ENCODE measurements at regions of chr22 and their contacts with region 1.

Region 1: DNA sequence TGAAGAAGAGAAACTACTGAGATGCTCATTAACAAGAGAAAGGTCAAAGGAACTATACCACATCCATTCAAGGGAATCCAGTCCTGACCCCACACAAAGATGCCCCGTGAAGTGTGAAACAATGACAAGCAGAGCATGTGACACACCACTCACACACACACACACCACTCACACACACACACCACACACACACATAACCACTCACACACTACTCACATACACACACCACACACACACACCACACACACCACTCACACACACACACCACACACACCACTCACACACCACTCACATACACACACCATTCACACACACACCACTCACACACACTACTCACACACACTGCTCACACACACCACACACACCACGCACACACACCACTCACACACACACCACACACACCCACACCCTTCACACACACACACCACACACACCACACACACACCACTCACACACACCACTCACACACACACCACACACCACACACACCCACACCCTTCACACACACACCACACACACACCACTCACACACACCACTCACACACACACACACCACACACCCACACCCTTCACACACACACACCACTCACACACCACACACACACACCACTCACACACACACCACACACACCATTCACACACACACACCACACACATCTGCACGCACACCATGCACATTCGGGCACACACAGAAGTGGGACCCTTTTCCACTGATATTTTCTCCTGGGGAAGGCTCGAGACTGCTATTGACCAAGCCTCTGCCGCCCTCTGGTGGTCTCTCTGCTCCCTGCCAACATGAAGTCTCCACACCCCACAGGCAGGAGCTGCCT is 32.0 kb upstream of the COMT start:
- DNase-seq: peak; percentile 79 to 92 (median 85)
- H3K4me3 ChIP-seq: no peak overlapping the region
- H3K27ac ChIP-seq: no peak overlapping the region
- H3K27me3 ChIP-seq: no peaks in the 10 kb centered on the region
- CTCF ChIP-seq: peak; percentile 60 to 93 (median 88)

Region 2: DNA sequence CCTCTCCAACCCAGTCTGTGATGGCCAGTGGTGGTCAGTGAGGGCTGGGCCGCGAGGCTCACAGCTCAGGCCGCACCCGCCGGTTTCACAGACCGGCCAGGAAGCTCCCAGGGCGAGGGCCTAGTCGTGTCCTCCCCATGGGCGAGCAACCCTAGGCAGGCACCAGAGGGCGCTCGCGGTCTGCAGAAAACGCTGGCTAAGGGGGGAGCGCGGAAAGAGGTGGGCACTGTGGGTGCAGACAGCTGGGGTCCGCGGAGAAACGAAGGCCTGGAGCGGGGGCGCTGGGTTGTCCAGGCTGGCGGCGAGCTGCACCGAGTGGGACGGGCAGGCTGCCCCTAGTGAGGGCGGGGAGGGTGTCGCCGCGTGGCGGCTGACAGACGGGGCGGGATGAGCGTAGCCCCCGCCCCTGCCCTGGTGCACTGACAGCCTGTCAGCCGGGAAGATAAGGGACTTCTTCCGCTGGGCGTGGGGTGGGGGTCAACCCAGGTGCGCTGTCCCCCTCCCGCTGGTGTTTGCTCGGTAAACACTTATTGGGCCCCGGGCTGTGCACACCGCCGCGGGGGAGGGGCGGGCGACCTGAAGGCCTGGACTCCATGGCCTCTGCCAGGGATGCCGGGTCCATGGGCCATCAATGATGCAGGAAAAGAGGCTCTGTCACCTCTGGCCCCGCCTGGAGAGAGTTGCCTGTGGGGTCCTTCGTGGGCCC is 178.8 kb before region 1 on chr22:
- intact Hi-C with region 1: loop called (anchors 1 kb)
- DNase-seq: peak; percentile 66 to 90 (median 77)
- H3K4me3 ChIP-seq: peak overlapping the region; percentile 14 to 64 (median 49)
- H3K27ac ChIP-seq: peak overlapping the region in 2 of 59 donors; percentile 4 to 52
- H3K27me3 ChIP-seq: no peaks in the 10 kb centered on the region
- CTCF ChIP-seq: peak; percentile 85 to 99 (median 96)

Region 3: DNA sequence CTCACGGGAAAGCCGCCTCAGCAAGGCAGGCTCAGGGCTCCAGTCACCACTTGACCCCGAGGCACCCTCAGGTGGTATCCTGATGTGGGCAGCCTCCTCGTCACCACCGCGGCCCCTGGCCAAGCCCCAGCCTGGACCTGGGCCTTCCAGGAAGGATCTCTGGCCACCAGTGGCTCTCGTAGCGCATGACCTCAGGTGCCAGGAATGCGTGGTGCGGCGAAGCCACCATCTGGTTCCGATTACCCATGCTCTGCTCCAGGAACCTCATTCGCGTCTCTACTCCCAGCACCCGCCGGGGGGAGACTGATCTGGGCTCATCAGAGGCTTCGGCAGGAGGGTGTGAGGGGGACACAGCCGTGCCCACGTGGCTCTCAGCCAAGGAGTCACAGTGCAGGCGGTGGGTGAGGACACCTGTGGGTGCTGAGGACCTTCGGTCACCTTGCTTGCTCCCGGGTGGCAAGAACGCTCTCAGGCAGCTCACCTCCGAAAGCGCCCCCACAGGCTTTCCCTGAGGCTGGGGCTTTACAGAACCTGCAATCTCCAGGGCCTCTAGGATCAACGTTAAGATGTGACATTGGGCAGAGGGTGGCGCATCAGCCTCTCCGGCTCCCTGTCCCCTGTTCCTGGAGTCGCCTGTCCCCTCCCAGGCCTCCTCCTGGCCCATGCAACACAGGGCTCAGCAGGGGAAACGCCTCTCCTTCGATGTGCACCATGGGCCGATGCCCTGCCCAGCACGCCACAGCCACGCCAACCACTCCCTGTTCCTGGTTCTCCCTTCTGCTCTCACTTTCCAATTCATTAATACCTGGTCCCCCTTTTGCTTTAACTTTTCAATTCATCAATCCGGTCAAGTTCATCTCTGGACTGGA is 110.0 kb before region 1 on chr22:
- intact Hi-C with region 1: loop called in 1 of 2 experiments (anchors 10 kb)
- DNase-seq: peak in 1 of 10 donors; percentile 28
- H3K4me3 ChIP-seq: no peak overlapping the region
- H3K27ac ChIP-seq: no peak overlapping the region
- H3K27me3 ChIP-seq: no peaks in the 10 kb centered on the region
- CTCF ChIP-seq: no peak